Gastrocnemius medialis (tissue), 4 donors: ENCODE measurements at regions of chr20 and their contacts with region 1.

Region 1: GRCh38 chr20:354298-355064 is 7.6 kb downstream of the NRSN2 start:
- DNase-seq: peak; percentile 29 to 58
- ATAC-seq: peak; percentile 93 to 97
- H3K4me3 ChIP-seq: no peak overlapping the region
- H3K27ac ChIP-seq: no peak overlapping the region
- H3K4me1 ChIP-seq: no peaks in the 10 kb centered on the region
- H3K27me3 ChIP-seq: peaks cover 0 to 4% (median 0%) of the 10 kb centered on the region in 3 donors
- CTCF ChIP-seq: peak; percentile 84 to 95 (median 91)
- POLR2A ChIP-seq: no peak

Region 2: GRCh38 chr20:407133-407952 is 52.9 kb after region 1 on chr20:
- in situ Hi-C with region 1: no loop called
- intact Hi-C with region 1: loop called (anchors 5 kb)
- DNase-seq: peak; percentile 57 to 73
- ATAC-seq: peak; percentile 71 to 77
- H3K4me3 ChIP-seq: peak overlapping the region; percentile 63 to 94 (median 80)
- H3K27ac ChIP-seq: peak overlapping the region; percentile 95 to 98 (median 97)
- H3K4me1 ChIP-seq: peaks cover 25 to 26% of the 10 kb centered on the region in 2 donors
- H3K27me3 ChIP-seq: no peaks in the 10 kb centered on the region
- CTCF ChIP-seq: peak in 3 of 5 experiments; percentile 25 to 36 (median 28)
- POLR2A ChIP-seq: no peak

Region 3: GRCh38 chr20:431012-431904 is 76.8 kb after region 1 on chr20:
- in situ Hi-C with region 1: loop called in 1 of 4 experiments (anchors 10 kb)
- intact Hi-C with region 1: loop called (anchors 1 kb)
- DNase-seq: peak; percentile 28 to 60
- ATAC-seq: peak; percentile 79 to 81
- H3K4me3 ChIP-seq: no peak overlapping the region
- H3K27ac ChIP-seq: no peak overlapping the region
- H3K4me1 ChIP-seq: peaks cover 0 to 12% of the 10 kb centered on the region in 2 donors
- H3K27me3 ChIP-seq: no peaks in the 10 kb centered on the region
- CTCF ChIP-seq: peak; percentile 43 to 57 (median 49)
- POLR2A ChIP-seq: no peak

Region 4: DNA sequence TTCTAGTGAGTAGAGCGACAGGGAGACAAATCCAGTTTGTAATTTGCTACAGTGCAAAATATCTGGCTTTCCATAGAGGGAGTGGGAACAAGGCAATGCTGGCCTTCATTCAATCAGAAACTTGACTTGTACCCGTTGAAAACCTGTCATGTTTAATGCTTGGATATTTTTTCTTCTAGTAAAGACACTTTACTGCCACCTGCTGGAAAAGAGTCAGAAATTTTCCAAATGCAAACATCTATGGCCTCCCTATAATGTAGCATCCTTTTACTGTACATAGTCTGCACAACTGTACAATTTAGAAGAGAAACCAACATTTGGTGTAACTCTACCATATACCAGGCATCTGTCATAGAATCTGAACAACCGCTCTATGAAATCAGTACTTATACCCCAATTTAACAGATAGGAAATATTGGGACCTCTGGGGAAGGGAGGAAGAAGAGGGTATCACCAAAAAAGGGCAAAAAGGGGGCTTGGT is 124.5 kb after region 1 on chr20:
- in situ Hi-C with region 1: loop called (anchors 5 kb)
- intact Hi-C with region 1: loop called (anchors 1 kb)
- DNase-seq: no peak
- ATAC-seq: peak; percentile 59 to 68
- H3K4me3 ChIP-seq: no peak overlapping the region
- H3K27ac ChIP-seq: no peak overlapping the region
- H3K4me1 ChIP-seq: peaks cover 0 to 4% of the 10 kb centered on the region in 2 donors
- H3K27me3 ChIP-seq: no peaks in the 10 kb centered on the region
- CTCF ChIP-seq: peak; percentile 56 to 74 (median 68)
- POLR2A ChIP-seq: no peak

Region 5: GRCh38 chr20:645318-646106 is 291.0 kb after region 1 on chr20:
- in situ Hi-C with region 1: loop called in 2 of 4 experiments (anchors 10 kb)
- intact Hi-C with region 1: loop called (anchors 2 kb)
- DNase-seq: peak in 1 of 2 donors; percentile 48
- ATAC-seq: peak; percentile 54 to 77
- H3K4me3 ChIP-seq: no peak overlapping the region
- H3K27ac ChIP-seq: peak overlapping the region; percentile 32 to 66 (median 58)
- H3K4me1 ChIP-seq: peaks cover 0 to 9% of the 10 kb centered on the region in 2 donors
- H3K27me3 ChIP-seq: peaks cover 0 to 14% (median 2%) of the 10 kb centered on the region in 3 donors
- CTCF ChIP-seq: peak; percentile 71 to 94 (median 89)
- POLR2A ChIP-seq: no peak

Region 6: GRCh38 chr20:733861-734260 is 379.4 kb after region 1 on chr20:
- in situ Hi-C with region 1: loop called in 2 of 4 experiments (anchors 10 kb)
- intact Hi-C with region 1: loop called (anchors 5 kb)
- DNase-seq: no peak
- ATAC-seq: no peak
- H3K4me3 ChIP-seq: no peak overlapping the region
- H3K27ac ChIP-seq: no peak overlapping the region
- H3K4me1 ChIP-seq: no peaks in the 10 kb centered on the region
- H3K27me3 ChIP-seq: peaks cover 8 to 13% (median 12%) of the 10 kb centered on the region in 3 donors
- CTCF ChIP-seq: no peak
- POLR2A ChIP-seq: no peak

Region 7: GRCh38 chr20:760751-761417 is 406.4 kb after region 1 on chr20:
- in situ Hi-C with region 1: no loop called
- intact Hi-C with region 1: no loop called
- DNase-seq: no peak
- ATAC-seq: no peak
- H3K4me3 ChIP-seq: no peak overlapping the region
- H3K27ac ChIP-seq: no peak overlapping the region
- H3K4me1 ChIP-seq: no peaks in the 10 kb centered on the region
- H3K27me3 ChIP-seq: peaks cover 0 to 7% (median 0%) of the 10 kb centered on the region in 3 donors
- CTCF ChIP-seq: peak; percentile 26 to 57 (median 49)
- POLR2A ChIP-seq: no peak